ENCODE measurements at regions of chr6 and their contacts with region 1.

Region 1: DNA sequence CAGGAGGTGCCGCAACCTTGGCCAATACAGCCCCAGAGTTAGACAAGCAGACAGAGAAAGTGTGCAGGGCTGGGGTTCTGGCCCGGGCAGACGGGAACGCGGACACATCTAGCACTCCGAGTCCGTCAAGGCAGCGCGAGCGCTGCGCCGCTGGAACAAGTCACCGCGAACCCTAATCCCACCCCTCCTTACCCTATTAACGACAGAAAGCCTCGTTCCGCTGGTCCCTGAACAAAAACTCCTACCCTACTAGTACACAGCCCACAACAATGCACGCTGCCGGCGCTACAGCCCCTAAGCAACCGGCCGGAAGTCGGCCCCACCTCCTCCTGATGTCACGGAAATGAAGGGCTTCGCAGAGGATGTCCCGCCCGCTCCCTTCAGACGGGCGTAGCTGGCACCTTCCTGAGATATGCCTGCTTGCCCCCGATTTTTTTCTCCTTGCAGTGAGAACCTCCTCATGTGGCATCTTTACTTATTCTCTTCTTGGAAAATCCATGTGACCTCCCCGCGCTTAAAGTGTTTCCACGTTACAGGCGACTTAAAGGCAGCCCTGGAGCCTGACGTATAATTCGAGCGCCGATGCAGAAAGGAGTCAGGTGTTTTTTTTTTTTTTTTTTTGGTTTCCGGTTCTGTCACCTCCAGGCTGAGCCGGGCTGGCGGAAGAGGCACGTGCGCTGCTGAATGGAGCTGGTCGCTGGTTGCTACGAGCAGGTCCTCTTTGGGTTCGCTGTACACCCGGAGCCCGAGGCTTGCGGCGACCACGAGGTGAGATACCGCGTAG is at the starts of genes C6orf52 and PAK1IP1:
- DNase-seq: peak; percentile 88
- ATAC-seq: peak; percentile 96
- H3K4me3 Mint-ChIP-seq: peak within 1 kb of the TSS; percentile 99
- H3K27ac Mint-ChIP-seq: peak within 1 kb of the TSS; percentile 100
- H3K4me1 Mint-ChIP-seq: peaks cover 35% of the 10 kb centered on the region
- H3K27me3 Mint-ChIP-seq: no peaks in the 10 kb centered on the region
- CTCF ChIP-seq: no peak
- total RNA-seq, gene C6orf52: 0.42 to 1.8 TPM (median 0.50 TPM) in 3 replicates
- total RNA-seq, gene PAK1IP1: 24.8 to 30.4 TPM (median 24.9 TPM) in 3 replicates

Region 2: GRCh38 chr6:10510592-10511367 is 183.7 kb before region 1 on chr6:
- CTCF ChIA-PET with region 1: interaction called, 7 read pairs
- POLR2A ChIA-PET with region 1: interaction called, 12 read pairs
- DNase-seq: peak; percentile 75
- ATAC-seq: peak; percentile 99
- H3K4me3 Mint-ChIP-seq: no peak overlapping the region
- H3K27ac Mint-ChIP-seq: no peak overlapping the region
- H3K4me1 Mint-ChIP-seq: peaks cover 18% of the 10 kb centered on the region
- H3K27me3 Mint-ChIP-seq: no peaks in the 10 kb centered on the region
- CTCF ChIP-seq: 0 out of 2 replicates have a peak, but pooled peaks have one; percentile 31

Region 3: GRCh38 chr6:10722820-10723566 is 28.5 kb after region 1 on chr6 and contains the start of gene TMEM14C:
- CTCF ChIA-PET with region 1: no interaction called
- POLR2A ChIA-PET with region 1: interaction called, 10 read pairs
- DNase-seq: peak; percentile 100
- ATAC-seq: peak; percentile 97
- H3K4me3 Mint-ChIP-seq: peak within 1 kb of the TSS; percentile 97
- H3K27ac Mint-ChIP-seq: peak within 1 kb of the TSS; percentile 99
- H3K4me1 Mint-ChIP-seq: peaks cover 28% of the 10 kb centered on the region
- H3K27me3 Mint-ChIP-seq: no peaks in the 10 kb centered on the region
- CTCF ChIP-seq: no peak
- total RNA-seq, gene TMEM14C: 103 to 122 TPM (median 119 TPM) in 3 replicates

Measured in WTC11 (cell line).